ENCODE measurements at regions of chr11 and their contacts with region 1.

Region 1: DNA sequence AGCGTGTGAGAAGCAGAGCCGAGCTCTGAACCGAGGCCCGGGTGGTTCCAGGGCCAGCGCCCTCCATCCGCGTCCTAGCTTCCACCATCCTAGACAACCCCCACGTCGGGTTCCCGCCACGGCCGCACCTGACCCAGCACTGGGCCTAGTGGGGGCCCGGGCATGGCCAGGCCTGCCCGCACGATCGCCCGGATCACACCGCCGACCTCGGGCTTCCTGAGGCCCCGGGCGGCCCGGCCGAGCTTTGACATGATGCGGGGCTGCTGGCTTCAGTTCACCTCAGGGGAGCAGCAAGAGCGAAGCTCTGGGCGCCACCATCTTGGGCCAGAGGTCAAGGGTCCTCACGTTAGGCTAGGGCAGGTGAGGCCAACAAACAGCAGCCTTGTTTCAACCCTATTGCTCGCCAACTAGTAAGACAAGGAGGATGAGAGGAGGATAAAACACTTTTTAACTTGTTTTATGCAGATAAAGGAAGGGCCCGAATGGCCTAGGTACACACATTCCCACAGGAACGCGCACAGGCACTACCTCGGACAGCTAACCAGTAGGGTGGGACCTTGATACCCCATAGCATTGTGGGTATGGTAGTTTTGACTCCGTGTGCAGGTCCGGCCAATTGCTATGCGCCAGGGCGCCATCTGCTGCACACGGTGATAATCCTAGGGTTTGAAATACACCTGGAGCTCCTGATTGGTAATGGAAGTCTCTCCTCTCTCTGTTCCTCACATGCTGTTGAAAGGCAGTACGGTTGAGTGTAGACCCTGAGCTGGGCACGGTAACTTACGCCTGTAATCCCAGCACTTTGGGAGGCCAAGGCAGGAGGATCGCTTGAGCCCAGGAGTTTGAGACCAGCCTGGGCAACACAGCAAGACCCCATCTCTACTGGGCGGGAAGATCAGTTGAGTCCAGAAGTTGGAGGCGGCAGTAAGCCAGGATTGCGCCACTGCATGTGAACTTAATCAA is at the start of gene MRPL11:
- DNase-seq: peak; percentile 79 to 96 (median 90)
- ATAC-seq: peak; percentile 99
- H3K4me3 ChIP-seq: peak within 1 kb of the TSS; percentile 72 to 78
- H3K4me3 Mint-ChIP-seq: peak within 1 kb of the TSS; percentile 91
- H3K27ac ChIP-seq: peak within 1 kb of the TSS; percentile 66 to 85
- H3K27ac Mint-ChIP-seq: peak within 1 kb of the TSS; percentile 98
- H3K4me1 ChIP-seq: peaks cover 7% of the 10 kb centered on the region
- H3K4me1 Mint-ChIP-seq: peaks cover 10% of the 10 kb centered on the region
- H3K27me3 ChIP-seq: no peaks in the 10 kb centered on the region
- H3K27me3 Mint-ChIP-seq: peaks cover 2% of the 10 kb centered on the region
- CTCF ChIP-seq: peak; percentile 64
- total RNA-seq, gene MRPL11: 19.8 to 20.6 TPM

Region 2: GRCh38 chr11:66365166-66365565 is 73.6 kb before region 1 on chr11:
- CTCF ChIA-PET with region 1: no interaction called
- POLR2A ChIA-PET with region 1: no interaction called
- intact Hi-C with region 1: no loop called
- DNase-seq: no peak
- ATAC-seq: no peak
- H3K4me3 ChIP-seq: no peak overlapping the region
- H3K4me3 Mint-ChIP-seq: no peak overlapping the region
- H3K27ac ChIP-seq: no peak overlapping the region
- H3K27ac Mint-ChIP-seq: no peak overlapping the region
- H3K4me1 ChIP-seq: no peaks in the 10 kb centered on the region
- H3K4me1 Mint-ChIP-seq: peaks cover 3% of the 10 kb centered on the region
- H3K27me3 ChIP-seq: no peaks in the 10 kb centered on the region
- H3K27me3 Mint-ChIP-seq: no peaks in the 10 kb centered on the region
- CTCF ChIP-seq: no peak

Region 3: GRCh38 chr11:66421492-66422205 is 17.1 kb before region 1 on chr11:
- CTCF ChIA-PET with region 1: interaction called, 9 read pairs
- POLR2A ChIA-PET with region 1: interaction called, 12 read pairs
- intact Hi-C with region 1: loop called (anchors 1 kb)
- DNase-seq: peak; percentile 81 to 93 (median 89)
- ATAC-seq: peak; percentile 98
- H3K4me3 ChIP-seq: no peak overlapping the region
- H3K4me3 Mint-ChIP-seq: no peak overlapping the region
- H3K27ac ChIP-seq: no peak overlapping the region
- H3K27ac Mint-ChIP-seq: no peak overlapping the region
- H3K4me1 ChIP-seq: no peaks in the 10 kb centered on the region
- H3K4me1 Mint-ChIP-seq: peaks cover 8% of the 10 kb centered on the region
- H3K27me3 ChIP-seq: peaks cover 16% of the 10 kb centered on the region in 2 experiments
- H3K27me3 Mint-ChIP-seq: peaks cover 28% of the 10 kb centered on the region
- CTCF ChIP-seq: no peak

Region 4: GRCh38 chr11:66480117-66480938 is 41.5 kb after region 1 on chr11 and contains the start of gene DPP3:
- CTCF ChIA-PET with region 1: interaction called, 4 read pairs
- POLR2A ChIA-PET with region 1: interaction called, 9 read pairs
- intact Hi-C with region 1: loop called (anchors 1 kb)
- DNase-seq: peak; percentile 91 to 97 (median 95)
- ATAC-seq: peak; percentile 98
- H3K4me3 ChIP-seq: peak within 1 kb of the TSS; percentile 90 to 93
- H3K4me3 Mint-ChIP-seq: peak within 1 kb of the TSS; percentile 89
- H3K27ac ChIP-seq: peak within 1 kb of the TSS; percentile 70 to 90
- H3K27ac Mint-ChIP-seq: peak within 1 kb of the TSS; percentile 89
- H3K4me1 ChIP-seq: peaks cover 17% of the 10 kb centered on the region
- H3K4me1 Mint-ChIP-seq: peaks cover 31% of the 10 kb centered on the region
- H3K27me3 ChIP-seq: no peaks in the 10 kb centered on the region
- H3K27me3 Mint-ChIP-seq: no peaks in the 10 kb centered on the region
- CTCF ChIP-seq: no peak
- total RNA-seq, gene DPP3: 13.7 to 15.6 TPM

Region 5: DNA sequence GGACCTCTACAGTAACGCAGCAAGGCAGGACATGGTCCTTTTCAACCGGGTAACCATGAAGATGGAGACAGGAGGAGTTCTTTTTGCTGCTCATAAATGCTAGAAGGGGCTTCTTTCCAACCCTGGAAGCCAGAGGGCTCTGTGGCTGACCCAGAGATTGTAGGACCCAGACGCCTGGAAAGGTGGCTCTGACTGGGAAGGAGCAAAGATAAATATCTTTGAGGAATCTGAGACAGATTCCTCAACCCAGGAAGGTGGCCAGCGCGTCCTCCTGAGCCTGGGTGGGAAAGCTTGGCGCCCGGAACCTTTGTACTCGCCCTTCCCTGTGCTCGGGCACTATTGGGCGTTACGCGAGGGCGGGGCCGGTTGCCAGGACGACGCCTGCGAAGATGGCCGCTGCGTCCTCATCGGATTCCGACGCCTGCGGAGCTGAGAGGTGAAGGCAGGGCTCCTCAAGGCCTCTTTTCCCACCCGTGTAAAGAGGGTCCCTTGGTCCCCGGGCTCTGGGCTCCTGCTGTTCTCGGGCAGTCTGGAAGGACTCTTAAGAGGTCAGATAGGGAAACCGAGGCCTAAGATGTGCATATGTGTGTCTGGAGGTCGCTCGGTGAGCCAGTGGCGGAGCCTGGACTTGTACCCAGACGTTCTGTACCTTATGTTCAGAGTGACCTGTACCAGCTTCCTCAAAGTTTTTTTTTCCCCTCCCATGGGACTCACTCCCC is 71.6 kb after region 1 on chr11 and contains the start of gene BBS1:
- CTCF ChIA-PET with region 1: no interaction called
- POLR2A ChIA-PET with region 1: interaction called, 5 read pairs
- intact Hi-C with region 1: loop called in 1 of 2 experiments (anchors 2 kb)
- DNase-seq: peak; percentile 62 to 91 (median 84)
- ATAC-seq: peak; percentile 98
- H3K4me3 ChIP-seq: peak within 1 kb of the TSS; percentile 68 to 81
- H3K4me3 Mint-ChIP-seq: peak within 1 kb of the TSS; percentile 88
- H3K27ac ChIP-seq: peak within 1 kb of the TSS; percentile 57 to 62
- H3K27ac Mint-ChIP-seq: peak within 1 kb of the TSS; percentile 22
- H3K4me1 ChIP-seq: peaks cover 15% of the 10 kb centered on the region
- H3K4me1 Mint-ChIP-seq: peaks cover 13% of the 10 kb centered on the region
- H3K27me3 ChIP-seq: no peaks in the 10 kb centered on the region
- H3K27me3 Mint-ChIP-seq: no peaks in the 10 kb centered on the region
- CTCF ChIP-seq: no peak
- total RNA-seq, gene BBS1: 10.8 to 13.5 TPM

Region 6: GRCh38 chr11:66556086-66556485 is 117.3 kb after region 1 on chr11:
- CTCF ChIA-PET with region 1: no interaction called
- POLR2A ChIA-PET with region 1: no interaction called
- intact Hi-C with region 1: no loop called
- DNase-seq: no peak
- ATAC-seq: no peak
- H3K4me3 ChIP-seq: no peak overlapping the region
- H3K4me3 Mint-ChIP-seq: no peak overlapping the region
- H3K27ac ChIP-seq: no peak overlapping the region
- H3K27ac Mint-ChIP-seq: no peak overlapping the region
- H3K4me1 ChIP-seq: peaks cover 7% of the 10 kb centered on the region
- H3K4me1 Mint-ChIP-seq: peaks cover 6% of the 10 kb centered on the region
- H3K27me3 ChIP-seq: peaks cover 0 to 6% of the 10 kb centered on the region in 2 experiments
- H3K27me3 Mint-ChIP-seq: peaks cover 9% of the 10 kb centered on the region
- CTCF ChIP-seq: no peak

Measured in CD8-positive, alpha-beta T cell (primary cell).